ENCODE measurements at regions of chr6 and their contacts with region 1.

Region 1: GRCh38 chr6:68313911-68314310 is 321.2 kb upstream of the ADGRB3 start:
- DNase-seq: peak; percentile 44
- H3K4me3 ChIP-seq: no peak overlapping the region
- H3K27ac ChIP-seq: no peak overlapping the region
- H3K4me1 ChIP-seq: no peaks in the 10 kb centered on the region
- H3K27me3 ChIP-seq: no peaks in the 10 kb centered on the region
- CTCF ChIP-seq: peak; percentile 63

Region 2: GRCh38 chr6:67068781-67069180 is 1245.1 kb before region 1 on chr6:
- CTCF ChIA-PET with region 1: no interaction called
- POLR2A ChIA-PET with region 1: no interaction called
- intact Hi-C with region 1: loop called (anchors 10 kb)
- DNase-seq: no peak
- H3K4me3 ChIP-seq: no peak overlapping the region
- H3K27ac ChIP-seq: no peak overlapping the region
- H3K4me1 ChIP-seq: no peaks in the 10 kb centered on the region
- H3K27me3 ChIP-seq: no peaks in the 10 kb centered on the region
- CTCF ChIP-seq: no peak